ENCODE measurements at regions of chr12 and their contacts with region 1.

Region 1: GRCh38 chr12:1939801-1940607 is 21.6 kb upstream of the CACNA2D4 start:
- H3K4me3 ChIP-seq: no peak overlapping the region
- H3K27ac ChIP-seq: no peak overlapping the region
- H3K4me1 ChIP-seq: no peaks in the 10 kb centered on the region
- CTCF ChIP-seq: peak; percentile 74

Region 2: GRCh38 chr12:1634590-1635191 is 305.3 kb before region 1 on chr12:
- CTCF ChIA-PET with region 1: interaction called, 28 read pairs
- POLR2A ChIA-PET with region 1: no interaction called
- H3K4me3 ChIP-seq: no peak overlapping the region
- H3K27ac ChIP-seq: no peak overlapping the region
- H3K4me1 ChIP-seq: no peaks in the 10 kb centered on the region; the same call in 1 of the 2 replicates
- CTCF ChIP-seq: peak; percentile 56

Region 3: DNA sequence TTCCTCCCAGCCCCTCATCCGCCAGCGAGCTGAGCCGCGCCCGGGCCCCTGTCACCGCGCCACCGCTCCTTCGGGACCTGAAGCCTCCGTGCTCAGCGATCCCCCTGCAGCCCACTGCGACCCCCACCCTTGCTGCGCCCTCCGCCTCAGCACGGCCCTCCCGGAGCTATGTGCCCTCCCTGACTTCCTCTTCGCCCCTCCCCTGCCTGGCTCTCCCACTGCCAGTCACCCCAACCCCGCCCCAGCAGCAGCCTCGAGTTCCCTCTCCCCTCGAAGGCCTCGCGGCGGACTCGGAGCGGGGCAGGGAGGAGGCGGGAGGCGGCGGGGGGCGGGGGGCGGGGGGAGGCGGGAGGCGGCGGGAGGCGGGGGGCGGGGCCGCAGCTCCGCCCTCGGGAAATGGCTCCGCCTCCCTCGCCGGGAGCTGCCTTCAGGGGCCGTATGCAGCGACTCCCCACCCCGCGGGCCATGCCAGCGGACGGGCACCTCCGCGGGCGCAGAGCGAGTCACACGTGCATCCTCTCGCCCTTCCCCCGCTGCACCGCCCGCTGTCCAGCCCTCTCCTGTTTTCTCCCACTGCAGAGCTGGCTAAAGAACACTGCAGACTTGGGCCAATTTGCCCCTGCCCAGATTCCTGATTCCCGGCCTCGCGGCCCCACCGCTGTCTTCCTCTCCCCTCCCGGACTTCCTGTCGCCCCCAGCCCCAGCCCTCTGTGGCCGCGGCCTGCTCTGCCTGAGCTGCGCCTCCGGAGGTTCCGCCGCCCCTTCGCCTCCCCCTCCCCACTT is 278.3 kb before region 1 on chr12:
- CTCF ChIA-PET with region 1: interaction called, 95 read pairs
- POLR2A ChIA-PET with region 1: interaction called, 3 read pairs
- H3K4me3 ChIP-seq: peak overlapping the region; percentile 45
- H3K27ac ChIP-seq: peak overlapping the region; percentile 37; the same call in 1 of the 2 replicates
- H3K4me1 ChIP-seq: no peaks in the 10 kb centered on the region
- CTCF ChIP-seq: no peak

Region 4: DNA sequence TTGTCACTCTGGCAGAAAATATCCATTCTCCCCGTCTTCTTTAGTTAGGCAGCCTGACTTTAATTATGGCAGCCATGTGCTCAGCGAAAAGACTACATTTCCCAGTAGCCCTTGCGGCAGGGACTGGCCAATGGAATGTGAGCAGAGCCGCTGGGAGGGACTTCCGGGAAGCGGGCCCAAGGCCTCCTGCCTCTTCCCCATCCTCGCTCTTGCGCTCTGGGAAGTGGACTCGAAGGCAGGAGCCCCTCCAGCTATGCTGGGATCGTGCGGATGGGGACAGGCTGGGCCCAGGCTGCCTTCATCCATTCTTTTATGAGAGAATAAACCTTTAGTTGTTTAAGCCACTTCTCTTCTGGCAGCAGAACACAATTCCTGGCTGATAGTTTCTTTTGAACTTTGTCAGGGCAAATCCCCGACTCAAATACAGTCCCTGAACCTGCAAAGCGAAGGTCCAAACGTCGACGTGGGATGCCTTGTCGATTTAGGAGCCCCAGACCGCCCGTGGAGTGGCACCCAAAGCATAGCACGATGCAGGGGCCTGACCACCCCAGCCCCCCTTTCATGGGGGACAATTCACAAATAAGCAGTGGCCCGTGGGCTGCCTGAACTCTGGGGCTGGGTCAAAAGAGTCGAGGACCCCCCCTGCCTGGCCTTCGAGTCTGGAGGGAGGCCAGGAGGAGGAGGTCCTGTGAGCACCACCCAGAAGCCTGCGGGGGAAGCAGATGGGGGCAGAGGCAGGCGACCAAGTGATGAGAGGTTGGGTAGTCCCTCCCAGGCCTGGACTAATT is 135.3 kb before region 1 on chr12:
- CTCF ChIA-PET with region 1: interaction called, 22 read pairs
- POLR2A ChIA-PET with region 1: no interaction called
- H3K4me3 ChIP-seq: no peak overlapping the region
- H3K27ac ChIP-seq: no peak overlapping the region
- H3K4me1 ChIP-seq: no peaks in the 10 kb centered on the region
- CTCF ChIP-seq: no peak

Region 5: GRCh38 chr12:1927751-1928351 is 12.2 kb before region 1 on chr12:
- CTCF ChIA-PET with region 1: interaction called, 19 read pairs
- POLR2A ChIA-PET with region 1: no interaction called
- H3K4me3 ChIP-seq: no peak overlapping the region
- H3K27ac ChIP-seq: no peak overlapping the region
- H3K4me1 ChIP-seq: peaks cover 5% of the 10 kb centered on the region; the same call in 1 of the 2 replicates
- CTCF ChIP-seq: no peak

Region 6: DNA sequence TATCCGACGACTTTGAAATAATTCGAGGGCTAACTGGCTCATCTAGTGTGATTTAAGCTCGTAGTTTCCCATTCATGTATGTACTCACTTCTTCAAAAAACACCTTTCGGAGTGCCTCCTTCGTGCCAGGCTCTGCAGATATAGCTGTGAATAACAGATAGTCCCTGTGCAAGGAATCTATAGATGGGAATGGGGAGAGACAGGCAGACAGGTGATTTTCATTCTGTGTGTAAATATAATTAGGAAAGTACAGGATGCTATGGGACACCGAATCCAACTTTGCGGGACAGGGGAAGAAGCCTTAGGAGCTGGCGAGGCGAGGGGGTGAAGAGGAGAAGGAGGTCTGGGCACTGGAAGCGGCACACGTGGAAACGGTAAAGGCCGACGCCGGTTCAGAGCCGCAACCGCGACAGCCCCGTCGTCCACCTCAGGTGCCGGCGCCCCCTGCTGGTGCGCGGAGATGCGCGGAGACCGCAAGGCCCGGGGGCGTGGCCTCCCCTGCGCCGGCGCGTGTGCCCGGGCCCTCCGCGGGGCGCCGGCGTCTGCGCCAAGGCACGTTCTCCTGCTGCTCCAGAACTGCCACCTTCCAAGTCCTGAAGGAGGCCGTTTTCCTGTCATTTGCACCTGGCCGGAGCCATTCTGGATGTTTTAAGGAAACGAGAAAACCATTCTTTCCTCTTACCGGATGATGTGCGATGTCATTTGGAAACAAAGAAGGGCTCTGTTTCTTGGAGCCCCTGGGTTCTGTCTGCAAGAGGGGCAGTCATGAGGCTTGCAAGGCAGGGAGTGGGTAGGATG is 94.8 kb after region 1 on chr12:
- CTCF ChIA-PET with region 1: interaction called, 21 read pairs
- POLR2A ChIA-PET with region 1: no interaction called
- H3K4me3 ChIP-seq: no peak overlapping the region; the same call in 1 of the 2 replicates
- H3K27ac ChIP-seq: no peak overlapping the region
- H3K4me1 ChIP-seq: 0 out of 2 replicates have a peak, but pooled peaks cover 4% of the 10 kb centered on the region
- CTCF ChIP-seq: peak; percentile 86

Measured in HEK293 (cell line).